ENCODE measurements at regions of chr4 and their contacts with region 1.

Region 1: DNA sequence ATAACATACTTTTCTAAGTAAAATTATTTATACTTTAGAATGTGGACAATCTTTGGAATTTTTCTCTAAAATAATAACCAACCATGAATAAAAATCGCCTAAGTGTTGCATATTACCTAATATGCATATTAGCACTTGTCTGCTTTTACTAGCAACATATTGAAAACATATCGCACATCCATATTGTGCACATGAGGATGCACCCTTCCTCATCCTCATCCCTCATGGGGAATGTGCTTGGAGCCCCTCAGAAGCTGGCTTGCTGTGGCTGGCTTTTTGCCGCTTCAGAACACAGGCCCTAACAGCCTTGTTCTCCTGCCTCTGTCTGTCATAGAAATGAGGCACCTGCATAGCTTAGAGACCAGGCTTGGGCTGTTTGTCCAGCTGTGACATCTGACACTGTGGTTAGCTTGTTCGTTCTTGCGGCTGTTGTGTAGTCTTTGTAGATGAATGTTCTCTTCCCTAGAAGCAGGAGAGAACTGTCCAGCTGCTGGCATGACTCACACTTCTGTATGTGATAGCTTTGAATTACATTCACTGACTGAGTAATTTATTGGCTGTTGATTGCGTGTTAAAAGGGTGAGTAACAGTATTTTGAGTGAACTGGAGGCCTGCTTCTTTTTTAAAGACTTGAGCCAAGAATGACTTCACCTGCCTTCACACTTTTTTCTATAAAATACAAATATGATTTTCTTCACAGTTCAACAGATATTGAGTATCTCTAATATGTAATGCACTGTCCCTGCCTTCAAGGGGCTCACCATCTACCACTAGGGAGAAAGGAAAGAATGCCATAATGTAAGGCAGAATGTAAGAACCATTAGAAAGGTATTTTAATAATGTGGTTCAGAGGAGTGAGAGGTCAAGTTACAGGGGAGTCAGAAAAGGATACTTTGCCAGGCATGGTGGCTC is 81.9 kb downstream of the HMGB2 start:
- DNase-seq: peak; percentile 100
- ATAC-seq: peak; percentile 94
- H3K4me3 ChIP-seq: no peak overlapping the region
- H3K27ac ChIP-seq: no peak overlapping the region
- H3K4me1 ChIP-seq: peaks cover 5% of the 10 kb centered on the region
- H3K27me3 ChIP-seq: peaks cover 19% of the 10 kb centered on the region
- CTCF ChIP-seq: no peak
- POLR2A ChIP-seq: no peak
- RAD21 ChIP-seq: no peak; the same call in none of the 2 replicates

Region 2: GRCh38 chr4:173218411-173219125 is 33.7 kb before region 1 on chr4:
- CTCF ChIA-PET with region 1: no interaction called
- POLR2A ChIA-PET with region 1: no interaction called
- dilution Hi-C with region 1: no loop called
- in situ Hi-C with region 1: no loop called
- intact Hi-C with region 1: loop called (anchors 5 kb)
- DNase-seq: peak; percentile 73
- ATAC-seq: peak; percentile 78
- H3K4me3 ChIP-seq: no peak overlapping the region
- H3K27ac ChIP-seq: no peak overlapping the region
- H3K4me1 ChIP-seq: peaks cover 4% of the 10 kb centered on the region
- H3K27me3 ChIP-seq: no peaks in the 10 kb centered on the region
- CTCF ChIP-seq: no peak
- POLR2A ChIP-seq: no peak
- RAD21 ChIP-seq: no peak